Activated B cell treated with CpG ODN at 0.5 μM for 24 hours (primary cell): ENCODE measurements at regions of chr9 and their contacts with region 1.

Region 1: GRCh38 chr9:68819065-68819464 is 114.0 kb downstream of the PIP5K1B start:
- DNase-seq: no peak
- ATAC-seq: no peak
- H3K4me3 Mint-ChIP-seq: no peak overlapping the region
- H3K27ac Mint-ChIP-seq: no peak overlapping the region
- H3K4me1 Mint-ChIP-seq: no peaks in the 10 kb centered on the region
- H3K27me3 Mint-ChIP-seq: no peaks in the 10 kb centered on the region
- CTCF ChIP-seq: no peak

Region 2: GRCh38 chr9:68832853-68833518 is 13.9 kb after region 1 on chr9:
- CTCF ChIA-PET with region 1: no interaction called
- POLR2A ChIA-PET with region 1: no interaction called
- intact Hi-C with region 1: loop called (anchors 2 kb)
- DNase-seq: no peak
- ATAC-seq: no peak
- H3K4me3 Mint-ChIP-seq: no peak overlapping the region
- H3K27ac Mint-ChIP-seq: no peak overlapping the region
- H3K4me1 Mint-ChIP-seq: no peaks in the 10 kb centered on the region
- H3K27me3 Mint-ChIP-seq: no peaks in the 10 kb centered on the region
- CTCF ChIP-seq: no peak